Activated T-helper 1 cell treated with anti-CD3 and anti-CD28 coated beads, Interleukin-12 subunit alpha, Interleukin-12 subunit beta, Interleukin-2, Interleukin-4 antibody, amounts not matched to agents 30 ng/mL and 10 ng/mL and 1 ng/mL, durations not matched to agents 14 hours and 24 hours and 36 hours (primary cell): ENCODE measurements at regions of chr13 and their contacts with region 1.

Region 1: DNA sequence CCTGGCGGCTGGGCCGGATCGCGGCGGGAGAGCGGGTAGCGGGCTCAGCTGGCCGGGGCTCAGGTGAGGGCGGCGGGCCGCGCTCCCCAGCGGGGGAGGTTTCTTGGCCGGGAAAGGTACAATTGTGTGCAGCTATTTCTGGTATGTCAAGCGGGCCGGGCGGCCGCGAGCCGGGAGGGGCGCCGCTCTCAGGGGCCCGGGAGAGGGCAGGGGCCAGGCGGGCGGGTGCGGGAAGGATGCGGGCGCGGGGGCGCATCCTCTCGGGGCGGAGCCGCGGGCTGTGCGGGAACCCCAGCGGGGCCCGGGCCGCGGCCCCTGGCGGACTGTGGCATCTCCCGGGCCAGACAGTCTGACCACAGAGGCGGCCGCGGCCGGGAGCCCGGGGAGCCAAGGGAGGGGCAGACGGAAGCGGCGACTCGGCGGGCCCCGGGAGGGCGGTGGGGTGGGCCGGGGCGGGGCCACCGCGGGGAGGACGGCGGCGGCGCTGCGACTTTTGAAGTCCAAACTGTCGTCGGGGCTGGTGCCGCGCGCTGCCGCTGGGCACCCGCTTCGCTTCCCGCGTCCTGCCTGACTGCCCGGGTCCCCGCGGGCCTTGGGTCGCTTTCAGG is at the start of gene LMO7:
- DNase-seq: peak; percentile 37
- H3K4me3 Mint-ChIP-seq: peak within 1 kb of the TSS; percentile 76
- H3K27ac Mint-ChIP-seq: no peak within 1 kb of the TSS
- H3K4me1 Mint-ChIP-seq: peaks cover 16% of the 10 kb centered on the region
- H3K27me3 Mint-ChIP-seq: peaks cover 26% of the 10 kb centered on the region
- total RNA-seq, gene LMO7: 2.9 and 3.2 TPM in 2 replicates

Region 2: GRCh38 chr13:75482070-75482819 is 153.7 kb before region 1 on chr13 and contains the start of gene TBC1D4:
- intact Hi-C with region 1: loop called (anchors 5 kb)
- DNase-seq: peak; percentile 40
- H3K4me3 Mint-ChIP-seq: peak within 1 kb of the TSS; percentile 99
- H3K27ac Mint-ChIP-seq: peak within 1 kb of the TSS; percentile 89
- H3K4me1 Mint-ChIP-seq: peaks cover 45% of the 10 kb centered on the region
- H3K27me3 Mint-ChIP-seq: peaks cover 49% of the 10 kb centered on the region
- total RNA-seq, gene TBC1D4: 66.6 and 73.5 TPM in 2 replicates